ENCODE measurements at regions of chr15 and their contacts with region 1.

Region 1: DNA sequence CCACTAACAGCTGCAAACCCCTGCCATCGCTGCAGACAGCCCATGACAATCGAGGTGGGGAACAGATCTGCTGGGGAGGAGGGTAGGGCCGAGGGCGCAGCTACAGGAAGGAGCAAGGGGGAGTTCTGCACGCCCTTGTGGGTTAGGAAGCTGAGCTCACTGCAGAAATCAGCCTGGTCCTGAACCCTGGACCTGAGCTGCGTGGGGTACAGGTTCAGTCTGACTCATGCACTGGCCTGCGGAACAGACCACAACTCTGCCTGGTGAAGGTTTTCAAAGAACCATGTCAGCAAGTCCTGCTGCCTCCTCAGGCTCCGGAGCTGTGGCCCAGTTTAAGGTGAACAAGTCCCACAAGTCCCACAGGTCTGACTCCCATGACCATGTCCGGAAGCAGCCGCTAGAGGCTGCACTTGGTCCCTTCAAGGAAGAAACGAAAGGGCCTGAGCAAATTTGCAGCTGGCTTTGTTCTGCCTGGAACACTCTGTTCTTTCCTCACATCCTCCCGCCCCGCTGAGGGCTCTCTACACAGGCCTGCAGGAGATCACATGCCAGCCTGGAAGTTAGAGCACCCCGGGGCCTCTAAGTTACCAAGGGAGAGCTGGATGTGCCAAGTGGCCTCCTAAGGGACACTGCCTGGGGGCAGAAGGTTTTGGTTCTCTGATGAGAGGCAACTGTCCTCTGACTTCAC is 49.4 kb upstream of the AKAP13 start:
- DNase-seq: peak; percentile 68
- H3K4me3 Mint-ChIP-seq: peak overlapping the region; percentile 91
- H3K27ac Mint-ChIP-seq: peak overlapping the region; percentile 96
- H3K4me1 Mint-ChIP-seq: peaks cover 48% of the 10 kb centered on the region
- H3K27me3 Mint-ChIP-seq: no peaks in the 10 kb centered on the region

Region 2: DNA sequence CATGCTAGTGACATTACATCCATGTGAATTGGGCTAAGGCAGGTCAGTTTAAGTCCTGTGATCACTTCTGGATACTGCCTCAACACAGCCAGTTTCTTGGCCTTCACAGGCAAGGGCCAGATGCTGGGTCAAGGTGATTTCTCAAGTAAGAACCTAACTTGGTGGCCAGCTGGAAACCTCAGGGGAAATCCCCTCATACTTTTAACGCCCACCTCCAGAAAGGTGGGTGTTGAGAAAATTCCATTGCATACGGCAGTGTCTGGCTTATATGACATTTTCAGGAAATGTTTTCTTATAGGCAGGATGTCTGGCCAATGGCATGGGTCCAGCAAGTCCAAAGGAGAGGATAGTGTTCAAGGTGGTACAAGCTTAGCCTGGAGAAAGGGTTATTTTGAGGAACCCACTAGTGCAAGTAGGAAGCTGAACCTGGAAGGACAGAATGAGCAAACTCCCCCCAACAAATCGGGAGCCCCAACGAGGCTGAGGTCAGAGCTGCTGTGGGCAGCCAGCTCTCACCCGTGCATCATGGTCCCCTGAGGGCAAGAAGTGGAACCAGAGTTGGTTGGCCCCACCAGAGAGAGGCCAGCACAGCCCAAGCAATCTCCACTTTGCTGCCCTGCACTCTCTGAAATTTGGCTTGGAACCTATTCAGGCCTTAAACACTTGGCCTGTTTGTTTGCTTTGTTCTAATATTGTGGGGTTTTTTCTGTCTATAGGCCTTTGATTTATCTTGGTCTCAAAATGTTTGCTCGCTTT is 213.9 kb before region 1 on chr15:
- intact Hi-C with region 1: no loop called
- DNase-seq: no peak
- H3K4me3 Mint-ChIP-seq: no peak overlapping the region
- H3K27ac Mint-ChIP-seq: peak overlapping the region; percentile 70
- H3K4me1 Mint-ChIP-seq: peaks cover 20% of the 10 kb centered on the region
- H3K27me3 Mint-ChIP-seq: no peaks in the 10 kb centered on the region

Region 3: GRCh38 chr15:85296615-85297402 is 34.2 kb before region 1 on chr15:
- intact Hi-C with region 1: loop called (anchors 2 kb)
- DNase-seq: peak; percentile 65
- H3K4me3 Mint-ChIP-seq: peak overlapping the region; percentile 28
- H3K27ac Mint-ChIP-seq: peak overlapping the region; percentile 8
- H3K4me1 Mint-ChIP-seq: peaks cover 19% of the 10 kb centered on the region
- H3K27me3 Mint-ChIP-seq: peaks cover 7% of the 10 kb centered on the region

Region 4: DNA sequence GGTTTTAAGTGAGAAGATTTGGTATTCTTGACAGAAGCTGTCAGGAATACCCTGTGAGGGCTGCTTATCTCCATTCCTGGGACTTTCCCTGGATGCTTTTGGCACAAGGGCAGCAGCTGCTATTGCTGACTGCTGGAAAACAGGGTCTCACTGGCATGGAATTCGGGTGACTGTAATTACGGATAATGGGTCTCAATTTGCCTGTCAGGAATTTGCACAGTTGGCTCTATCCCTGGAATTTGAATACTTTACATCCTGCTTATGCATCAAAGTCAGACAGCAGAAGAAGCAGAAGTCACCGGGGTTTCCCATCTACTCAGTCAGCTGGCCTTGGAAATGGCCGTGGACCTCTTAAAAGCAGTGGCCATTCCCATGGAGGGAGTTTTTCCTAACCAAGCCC is 23.4 kb after region 1 on chr15:
- intact Hi-C with region 1: loop called (anchors 1 kb)
- DNase-seq: no peak
- H3K4me3 Mint-ChIP-seq: no peak overlapping the region
- H3K27ac Mint-ChIP-seq: no peak overlapping the region
- H3K4me1 Mint-ChIP-seq: peaks cover 19% of the 10 kb centered on the region
- H3K27me3 Mint-ChIP-seq: peaks cover 3% of the 10 kb centered on the region

Region 5: GRCh38 chr15:85407804-85408746 is 77.0 kb after region 1 on chr15:
- intact Hi-C with region 1: loop called (anchors 1 kb)
- DNase-seq: no peak
- H3K4me3 Mint-ChIP-seq: peak overlapping the region; percentile 54
- H3K27ac Mint-ChIP-seq: peak overlapping the region; percentile 89
- H3K4me1 Mint-ChIP-seq: peaks cover 69% of the 10 kb centered on the region
- H3K27me3 Mint-ChIP-seq: no peaks in the 10 kb centered on the region

Region 6: GRCh38 chr15:85504749-85505676 is 174.0 kb after region 1 on chr15:
- intact Hi-C with region 1: loop called (anchors 1 kb)
- DNase-seq: no peak
- H3K4me3 Mint-ChIP-seq: no peak overlapping the region
- H3K27ac Mint-ChIP-seq: peak overlapping the region; percentile 54
- H3K4me1 Mint-ChIP-seq: peaks cover 54% of the 10 kb centered on the region
- H3K27me3 Mint-ChIP-seq: no peaks in the 10 kb centered on the region

Measured in activated T-helper 2 cell treated with anti-CD3 and anti-CD28 coated beads, Interferon-gamma antibody, Interleukin-2, Interleukin-4, amounts not matched to agents 10 μg/mL and 5 μg/mL and 100 μg/mL, durations not matched to agents 14 hours and 24 hours and 36 hours (primary cell).